Activated CD4-positive, alpha-beta memory T cell treated with anti-CD3 and anti-CD28 coated beads for 36 hours (primary cell): ENCODE measurements at regions of chr14 and their contacts with region 1.

Region 1: DNA sequence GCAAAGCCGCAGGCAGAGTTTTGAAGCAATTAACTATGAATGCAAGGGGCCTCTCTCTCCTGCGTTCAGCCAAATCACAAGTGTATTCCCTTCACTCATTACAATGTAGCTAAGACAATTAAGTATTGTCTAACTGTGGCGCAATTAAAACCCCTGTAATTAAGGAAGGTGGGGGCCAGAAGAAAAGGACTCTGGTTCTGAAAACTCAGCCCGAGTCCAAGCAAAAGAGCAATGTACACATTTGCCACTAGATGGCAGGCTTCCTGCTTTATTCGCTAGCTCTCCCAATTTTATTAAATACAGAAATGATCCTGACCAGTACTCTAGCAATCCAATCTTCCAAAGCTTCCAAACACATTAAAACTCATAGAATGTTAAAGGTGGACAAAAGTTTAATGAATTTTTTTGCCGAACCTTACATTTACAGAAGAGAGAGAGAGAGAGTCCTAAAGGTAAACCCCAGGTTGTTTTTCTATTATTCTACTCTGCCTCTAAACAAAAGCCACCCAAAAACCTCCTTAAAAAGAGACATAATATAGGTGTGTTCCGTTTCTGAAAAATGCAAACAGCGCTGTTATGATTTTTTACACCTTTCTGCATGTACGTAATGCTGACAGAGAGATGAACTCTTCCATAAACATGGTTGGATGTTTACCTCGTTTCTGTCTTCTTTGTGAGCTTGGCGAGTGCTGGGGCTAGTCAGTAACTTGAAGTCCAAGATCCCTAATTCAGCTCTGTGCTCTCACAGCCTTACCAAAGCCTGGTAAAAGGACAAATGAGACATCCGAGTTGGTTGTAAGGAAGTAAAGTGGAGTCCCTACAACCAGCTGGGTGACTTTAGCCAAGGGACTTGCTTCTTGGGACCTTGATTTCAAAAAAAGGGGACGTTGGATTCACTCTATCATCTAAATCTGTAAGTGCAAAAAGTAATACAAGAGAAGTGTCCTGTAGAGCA is 50.9 kb upstream of the VASH1 start:
- DNase-seq: peak; percentile 20
- H3K4me3 Mint-ChIP-seq: no peak overlapping the region
- H3K27ac Mint-ChIP-seq: no peak overlapping the region
- H3K4me1 Mint-ChIP-seq: no peaks in the 10 kb centered on the region
- H3K27me3 Mint-ChIP-seq: peaks cover 16% of the 10 kb centered on the region

Region 2: DNA sequence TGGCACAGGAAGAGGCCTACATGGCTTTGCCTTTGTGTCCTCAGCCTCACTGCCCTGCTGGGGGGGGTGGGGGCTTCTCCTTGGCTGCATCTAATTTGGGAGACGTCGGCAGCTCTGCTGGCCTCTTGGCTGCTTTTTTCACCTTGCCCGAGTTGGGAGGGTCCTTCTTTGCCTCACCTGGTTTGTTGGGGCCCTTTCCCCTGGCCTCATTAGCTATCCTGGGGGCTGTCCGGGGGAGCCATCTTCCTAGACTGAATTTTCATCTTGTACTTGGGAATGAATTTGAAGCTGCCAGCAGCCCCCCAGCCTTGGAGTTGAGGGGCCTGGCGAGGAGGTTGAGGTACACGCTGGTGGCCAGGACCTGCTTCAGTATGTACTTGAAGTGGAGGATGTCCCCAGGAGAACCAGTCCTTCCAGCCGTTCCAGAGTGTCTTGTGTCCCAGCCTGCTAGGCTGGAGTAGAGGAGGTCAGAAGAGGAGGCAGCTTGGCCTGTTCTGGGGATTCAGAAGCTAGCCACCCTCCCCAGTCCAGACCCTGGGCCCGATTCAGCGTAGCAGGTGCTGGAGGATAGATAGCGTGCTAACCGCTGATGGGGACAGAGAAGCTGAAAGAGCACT is 19.7 kb before region 1 on chr14:
- CTCF ChIA-PET with region 1: interaction called, 10 read pairs
- POLR2A ChIA-PET with region 1: no interaction called
- intact Hi-C with region 1: no loop called
- DNase-seq: no peak
- H3K4me3 Mint-ChIP-seq: no peak overlapping the region
- H3K27ac Mint-ChIP-seq: no peak overlapping the region
- H3K4me1 Mint-ChIP-seq: no peaks in the 10 kb centered on the region
- H3K27me3 Mint-ChIP-seq: peaks cover 12% of the 10 kb centered on the region

Region 3: DNA sequence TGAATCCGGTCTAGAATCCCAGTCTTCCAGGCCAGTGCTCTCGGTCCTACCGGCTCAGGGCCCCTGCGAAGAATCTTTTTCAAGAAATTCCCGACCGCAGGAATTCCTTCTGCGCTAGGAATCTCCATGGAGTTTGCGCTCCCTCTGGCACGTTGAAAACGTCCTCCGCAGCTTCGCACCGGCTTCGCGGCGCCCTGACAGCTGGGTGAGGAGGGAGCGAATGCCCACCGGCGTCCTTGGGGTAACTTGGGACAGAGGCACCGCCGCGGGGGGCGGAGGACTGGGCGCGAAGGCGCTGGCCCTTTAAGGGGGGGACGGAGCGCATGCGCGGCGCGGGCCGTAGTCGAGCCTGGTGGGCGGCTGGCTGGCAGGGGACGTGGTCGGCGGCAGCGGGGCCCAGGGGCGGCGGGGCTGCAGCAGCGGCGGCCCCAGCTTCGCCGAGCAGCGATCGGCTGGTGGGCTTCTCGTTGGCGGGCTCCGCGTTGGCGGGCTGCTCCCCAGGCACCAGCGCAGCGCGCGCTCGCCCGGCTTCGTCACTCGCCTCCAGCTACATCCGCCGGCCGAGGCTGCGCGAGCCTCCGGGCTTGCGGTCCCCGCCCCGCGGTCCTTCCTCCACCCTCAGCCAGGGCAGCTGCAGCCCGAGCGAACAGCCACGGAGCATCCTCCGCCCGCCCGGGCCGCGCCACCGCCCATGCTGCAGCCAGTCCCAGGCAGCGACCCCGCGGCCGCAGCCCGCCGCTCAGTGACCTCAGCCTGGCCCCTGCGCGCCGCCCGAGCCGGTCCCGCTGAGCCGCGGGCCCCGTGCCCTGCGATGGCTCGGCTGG is 51.0 kb after region 1 on chr14 and contains the start of gene VASH1:
- CTCF ChIA-PET with region 1: interaction called, 31 read pairs
- POLR2A ChIA-PET with region 1: no interaction called
- intact Hi-C with region 1: no loop called
- DNase-seq: peak; percentile 73
- H3K4me3 Mint-ChIP-seq: peak within 1 kb of the TSS; percentile 75
- H3K27ac Mint-ChIP-seq: no peak within 1 kb of the TSS
- H3K4me1 Mint-ChIP-seq: peaks cover 12% of the 10 kb centered on the region
- H3K27me3 Mint-ChIP-seq: peaks cover 6% of the 10 kb centered on the region
- total RNA-seq, gene VASH1: 6.1 TPM

Region 4: GRCh38 chr14:76776666-76777251 is 66.4 kb after region 1 on chr14:
- CTCF ChIA-PET with region 1: interaction called, 158 read pairs
- POLR2A ChIA-PET with region 1: no interaction called
- intact Hi-C with region 1: no loop called
- DNase-seq: no peak
- H3K4me3 Mint-ChIP-seq: no peak overlapping the region
- H3K27ac Mint-ChIP-seq: no peak overlapping the region
- H3K4me1 Mint-ChIP-seq: peaks cover 9% of the 10 kb centered on the region
- H3K27me3 Mint-ChIP-seq: no peaks in the 10 kb centered on the region

Region 5: GRCh38 chr14:76812211-76813044 is 102.1 kb after region 1 on chr14 and contains the start of gene ANGEL1:
- CTCF ChIA-PET with region 1: interaction called, 70 read pairs
- POLR2A ChIA-PET with region 1: interaction called, 4 read pairs
- intact Hi-C with region 1: loop called (anchors 1 kb)
- DNase-seq: peak; percentile 98
- H3K4me3 Mint-ChIP-seq: peak within 1 kb of the TSS; percentile 92
- H3K27ac Mint-ChIP-seq: peak within 1 kb of the TSS; percentile 80
- H3K4me1 Mint-ChIP-seq: peaks cover 19% of the 10 kb centered on the region
- H3K27me3 Mint-ChIP-seq: no peaks in the 10 kb centered on the region
- total RNA-seq, gene ANGEL1: 14.6 to 15.9 TPM

Region 6: DNA sequence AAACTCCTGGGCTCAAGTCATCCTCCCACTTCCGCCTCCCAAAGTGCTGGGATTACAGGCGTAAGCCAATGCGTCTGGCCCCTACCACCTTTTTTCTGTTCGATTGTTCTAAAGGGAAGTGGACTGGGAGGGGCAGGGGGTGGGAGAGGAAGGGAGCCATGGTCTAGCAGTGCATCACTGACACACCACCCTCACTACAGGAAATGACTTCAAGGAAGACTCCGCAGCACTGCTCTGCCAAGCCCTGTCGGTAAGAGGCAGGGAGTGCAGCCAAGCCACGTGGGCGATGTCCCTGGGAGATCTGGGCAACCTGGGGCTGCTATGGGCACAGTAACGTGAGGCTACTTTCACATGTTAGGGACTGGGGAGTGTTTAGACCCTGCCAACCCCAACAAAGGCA is 133.9 kb after region 1 on chr14:
- CTCF ChIA-PET with region 1: no interaction called
- POLR2A ChIA-PET with region 1: no interaction called
- intact Hi-C with region 1: no loop called
- DNase-seq: peak; percentile 83
- H3K4me3 Mint-ChIP-seq: no peak overlapping the region
- H3K27ac Mint-ChIP-seq: peak overlapping the region; percentile 53
- H3K4me1 Mint-ChIP-seq: peaks cover 5% of the 10 kb centered on the region
- H3K27me3 Mint-ChIP-seq: peaks cover 7% of the 10 kb centered on the region

Region 7: GRCh38 chr14:77076113-77076631 is 365.8 kb after region 1 on chr14:
- CTCF ChIA-PET with region 1: interaction called, 23 read pairs
- POLR2A ChIA-PET with region 1: no interaction called
- intact Hi-C with region 1: no loop called
- DNase-seq: no peak
- H3K4me3 Mint-ChIP-seq: no peak overlapping the region
- H3K27ac Mint-ChIP-seq: no peak overlapping the region
- H3K4me1 Mint-ChIP-seq: no peaks in the 10 kb centered on the region
- H3K27me3 Mint-ChIP-seq: peaks cover under 1% of the 10 kb centered on the region